ENCODE measurements at regions of chr10 and their contacts with region 1.

Region 1: GRCh38 chr10:13414894-13415293 is 66.8 kb upstream of the SEPHS1 start:
- DNase-seq: peak; percentile 26
- H3K4me3 ChIP-seq: no peak overlapping the region
- H3K27ac ChIP-seq: no peak overlapping the region
- H3K4me1 ChIP-seq: peaks cover 15% of the 10 kb centered on the region
- H3K27me3 ChIP-seq: no peaks in the 10 kb centered on the region
- CTCF ChIP-seq: peak; percentile 38 to 59

Region 2: DNA sequence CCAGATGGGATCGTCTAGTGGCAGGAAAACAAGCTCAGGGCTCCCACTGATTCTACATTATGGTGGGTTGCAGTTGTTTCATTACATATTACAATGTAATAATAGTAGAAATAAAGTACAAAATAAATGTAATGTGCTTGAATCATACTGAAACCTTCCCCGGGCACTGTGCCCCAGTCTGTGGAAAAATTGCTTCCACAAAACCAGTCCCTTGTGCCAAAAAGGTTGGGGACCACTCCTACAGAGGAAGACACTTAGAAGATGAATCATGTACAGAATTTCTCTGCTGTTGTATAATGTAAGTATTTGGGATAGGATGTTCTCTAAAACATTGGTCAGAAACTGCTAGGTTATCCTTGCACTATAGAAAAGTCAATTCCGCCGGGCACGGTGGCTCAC is 103.7 kb before region 1 on chr10:
- CTCF ChIA-PET with region 1: no interaction called
- dilution Hi-C with region 1: loop called (anchors 5 kb)
- in situ Hi-C with region 1: no loop called
- intact Hi-C with region 1: no loop called
- DNase-seq: no peak
- H3K4me3 ChIP-seq: no peak overlapping the region
- H3K27ac ChIP-seq: no peak overlapping the region
- H3K4me1 ChIP-seq: no peaks in the 10 kb centered on the region
- H3K27me3 ChIP-seq: no peaks in the 10 kb centered on the region
- CTCF ChIP-seq: no peak

Region 3: DNA sequence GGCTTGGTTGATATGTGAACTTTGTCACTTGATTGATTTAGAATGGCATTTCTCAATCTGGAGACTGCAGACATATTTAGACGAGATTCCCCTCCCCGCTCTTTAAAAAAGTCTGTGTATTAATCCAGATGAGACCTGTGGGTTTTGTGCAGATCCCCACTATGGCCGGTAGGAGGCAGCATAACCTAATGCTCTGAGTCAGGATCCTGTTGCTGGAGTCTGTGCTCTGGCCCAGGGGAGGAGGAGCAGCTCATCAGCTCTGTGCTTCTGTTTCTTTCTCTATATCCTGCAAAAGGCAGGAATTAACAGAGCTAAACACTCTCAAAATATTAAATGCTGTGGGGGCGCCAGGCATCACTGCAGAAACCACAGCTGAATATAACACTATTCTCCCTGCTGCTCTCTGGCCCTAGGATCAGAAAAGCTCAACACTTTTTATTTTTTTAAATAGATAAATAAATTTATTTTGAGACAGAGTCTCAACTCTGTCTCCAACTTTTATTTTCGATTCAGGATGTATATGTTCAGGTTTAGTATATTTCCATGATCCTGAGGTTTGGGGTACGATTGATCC is 42.9 kb before region 1 on chr10:
- CTCF ChIA-PET with region 1: interaction called, 9 read pairs
- dilution Hi-C with region 1: no loop called
- in situ Hi-C with region 1: no loop called
- intact Hi-C with region 1: loop called (anchors 2 kb)
- DNase-seq: peak; percentile 73
- H3K4me3 ChIP-seq: no peak overlapping the region
- H3K27ac ChIP-seq: no peak overlapping the region
- H3K4me1 ChIP-seq: no peaks in the 10 kb centered on the region
- H3K27me3 ChIP-seq: no peaks in the 10 kb centered on the region
- CTCF ChIP-seq: peak; percentile 99

Region 4: DNA sequence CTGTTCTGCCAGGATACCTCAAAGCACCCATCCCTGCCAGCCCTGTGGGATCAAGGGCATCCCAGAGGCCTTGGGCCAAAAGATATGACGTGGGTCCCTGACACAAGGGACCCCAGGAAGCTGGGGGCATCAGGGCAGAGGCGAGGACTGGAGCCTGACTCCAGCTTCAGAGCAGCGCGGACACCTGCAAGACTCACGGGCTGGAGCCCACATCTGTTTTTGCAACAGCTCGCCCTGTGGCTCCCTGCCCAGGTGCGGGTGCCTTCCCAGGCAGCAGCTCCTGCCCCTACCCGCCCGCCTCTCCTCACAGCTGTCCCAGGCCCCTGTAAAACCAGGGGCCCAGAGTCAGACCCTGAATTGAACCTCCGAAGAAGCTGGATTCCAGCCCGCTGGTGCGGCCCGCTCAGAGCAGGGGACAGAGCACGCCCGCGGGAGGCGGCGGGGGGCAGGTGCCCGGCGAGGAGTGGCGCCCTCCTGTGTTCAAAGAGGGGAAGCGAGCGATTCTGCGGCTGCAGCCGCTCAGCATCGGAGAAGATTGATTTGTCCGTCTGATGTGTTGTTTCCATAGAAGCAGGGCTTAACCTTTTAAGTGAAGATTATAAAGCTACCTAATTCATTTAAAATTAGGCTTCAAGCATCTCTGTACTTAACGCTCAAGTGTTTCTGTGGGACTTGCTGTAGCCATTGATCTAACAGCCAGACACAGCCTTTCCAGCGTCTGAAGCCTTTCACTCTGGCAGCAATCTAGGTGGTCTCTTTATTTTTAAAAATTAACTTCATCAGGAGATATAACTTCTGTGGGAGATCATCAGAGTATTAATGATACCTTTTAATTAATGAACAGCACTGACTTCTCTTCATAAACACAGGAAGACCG is 25.5 kb after region 1 on chr10:
- CTCF ChIA-PET with region 1: no interaction called
- dilution Hi-C with region 1: no loop called
- in situ Hi-C with region 1: no loop called
- intact Hi-C with region 1: loop called (anchors 2 kb)
- DNase-seq: peak; percentile 43
- H3K4me3 ChIP-seq: peak overlapping the region; percentile 15 to 40 (median 35)
- H3K27ac ChIP-seq: no peak overlapping the region
- H3K4me1 ChIP-seq: peaks cover 13% of the 10 kb centered on the region
- H3K27me3 ChIP-seq: peaks cover 3% of the 10 kb centered on the region
- CTCF ChIP-seq: peak; percentile 69 to 95

Region 5: DNA sequence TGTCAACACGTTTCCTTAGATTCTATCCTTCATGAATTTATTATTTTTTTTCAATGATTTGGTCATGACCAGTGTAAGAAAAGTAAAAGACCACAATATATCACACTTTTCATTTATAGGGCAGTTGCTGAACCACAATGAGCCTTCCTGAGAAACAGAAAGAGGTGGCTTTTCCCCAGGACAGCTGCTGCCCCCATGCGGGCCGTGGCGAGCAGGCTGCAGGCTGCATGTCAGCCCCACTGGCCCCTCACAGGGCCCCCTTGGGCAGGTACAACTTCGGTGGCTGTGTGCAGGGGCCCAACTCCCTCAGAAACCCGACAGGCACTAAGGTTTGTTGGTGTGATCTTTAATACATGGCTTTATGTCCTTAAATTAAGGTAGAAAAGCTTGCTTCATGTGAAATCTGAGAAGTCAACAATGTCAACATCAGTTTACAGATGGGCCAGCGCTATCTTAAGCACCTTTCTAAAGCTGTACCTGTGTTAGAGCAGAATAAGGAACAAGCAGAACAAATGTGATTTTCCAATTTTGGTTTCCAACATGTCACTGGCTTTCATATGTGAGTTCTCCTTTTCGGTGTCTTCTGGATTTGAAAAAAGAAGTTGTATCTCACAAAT is 103.3 kb after region 1 on chr10:
- CTCF ChIA-PET with region 1: no interaction called
- dilution Hi-C with region 1: loop called (anchors 5 kb)
- in situ Hi-C with region 1: no loop called
- intact Hi-C with region 1: no loop called
- DNase-seq: no peak
- H3K4me3 ChIP-seq: no peak overlapping the region
- H3K27ac ChIP-seq: no peak overlapping the region
- H3K4me1 ChIP-seq: no peaks in the 10 kb centered on the region
- H3K27me3 ChIP-seq: no peaks in the 10 kb centered on the region
- CTCF ChIP-seq: peak in 1 of 2 donors; percentile 36

Region 6: GRCh38 chr10:13536674-13537366 is 121.9 kb after region 1 on chr10:
- CTCF ChIA-PET with region 1: no interaction called
- dilution Hi-C with region 1: no loop called
- in situ Hi-C with region 1: no loop called
- intact Hi-C with region 1: loop called (anchors 1 kb)
- DNase-seq: peak; percentile 14
- H3K4me3 ChIP-seq: no peak overlapping the region
- H3K27ac ChIP-seq: no peak overlapping the region
- H3K4me1 ChIP-seq: no peaks in the 10 kb centered on the region
- H3K27me3 ChIP-seq: no peaks in the 10 kb centered on the region
- CTCF ChIP-seq: peak; percentile 44 to 70

Region 7: DNA sequence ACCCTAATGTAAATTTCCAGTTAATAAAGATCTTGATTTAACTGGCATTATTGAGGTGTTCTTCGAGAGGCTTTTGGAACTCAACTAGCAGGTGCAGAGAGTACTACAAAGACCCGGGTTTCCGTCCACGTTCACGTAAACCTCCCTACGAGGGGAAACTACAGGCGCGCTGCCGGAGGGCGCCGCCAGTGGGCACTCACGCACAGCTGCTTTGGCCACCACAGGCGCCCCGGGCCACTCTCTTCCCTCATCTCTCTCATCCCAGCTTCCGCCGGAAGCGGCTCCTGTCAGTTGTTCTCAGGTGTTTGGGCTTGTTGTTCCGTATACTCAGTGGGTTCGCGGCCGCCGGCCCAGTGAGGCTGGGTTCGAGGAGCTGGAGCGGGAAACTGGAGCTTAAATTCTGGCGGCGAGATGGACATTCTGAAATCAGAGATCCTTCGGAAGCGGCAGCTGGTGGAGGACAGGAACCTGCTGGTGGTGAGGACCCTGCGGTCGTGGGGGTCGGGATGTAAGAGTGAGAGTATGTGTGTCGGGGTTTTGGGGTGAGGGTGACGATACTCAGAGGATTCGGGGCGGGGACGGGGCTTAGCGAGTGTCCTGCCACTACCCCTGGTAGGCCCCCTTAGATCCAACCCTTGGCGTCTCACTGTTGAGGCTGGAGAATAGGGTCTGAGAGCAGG is 171.9 kb after region 1 on chr10 and contains the start of gene PRPF18:
- CTCF ChIA-PET with region 1: no interaction called
- dilution Hi-C with region 1: loop called (anchors 5 kb)
- in situ Hi-C with region 1: no loop called
- intact Hi-C with region 1: loop called (anchors 2 kb)
- DNase-seq: peak; percentile 89
- H3K4me3 ChIP-seq: peak within 1 kb of the TSS; percentile 94 to 96 (median 94)
- H3K27ac ChIP-seq: peak within 1 kb of the TSS; percentile 73
- H3K4me1 ChIP-seq: peaks cover 4% of the 10 kb centered on the region
- H3K27me3 ChIP-seq: no peaks in the 10 kb centered on the region
- CTCF ChIP-seq: peak; percentile 92 to 97
- total RNA-seq, gene PRPF18: 22.4 to 23.0 TPM

Measured in mammary epithelial cell (primary cell).